ENCODE measurements at regions of chr21 and their contacts with region 1.

Region 1: DNA sequence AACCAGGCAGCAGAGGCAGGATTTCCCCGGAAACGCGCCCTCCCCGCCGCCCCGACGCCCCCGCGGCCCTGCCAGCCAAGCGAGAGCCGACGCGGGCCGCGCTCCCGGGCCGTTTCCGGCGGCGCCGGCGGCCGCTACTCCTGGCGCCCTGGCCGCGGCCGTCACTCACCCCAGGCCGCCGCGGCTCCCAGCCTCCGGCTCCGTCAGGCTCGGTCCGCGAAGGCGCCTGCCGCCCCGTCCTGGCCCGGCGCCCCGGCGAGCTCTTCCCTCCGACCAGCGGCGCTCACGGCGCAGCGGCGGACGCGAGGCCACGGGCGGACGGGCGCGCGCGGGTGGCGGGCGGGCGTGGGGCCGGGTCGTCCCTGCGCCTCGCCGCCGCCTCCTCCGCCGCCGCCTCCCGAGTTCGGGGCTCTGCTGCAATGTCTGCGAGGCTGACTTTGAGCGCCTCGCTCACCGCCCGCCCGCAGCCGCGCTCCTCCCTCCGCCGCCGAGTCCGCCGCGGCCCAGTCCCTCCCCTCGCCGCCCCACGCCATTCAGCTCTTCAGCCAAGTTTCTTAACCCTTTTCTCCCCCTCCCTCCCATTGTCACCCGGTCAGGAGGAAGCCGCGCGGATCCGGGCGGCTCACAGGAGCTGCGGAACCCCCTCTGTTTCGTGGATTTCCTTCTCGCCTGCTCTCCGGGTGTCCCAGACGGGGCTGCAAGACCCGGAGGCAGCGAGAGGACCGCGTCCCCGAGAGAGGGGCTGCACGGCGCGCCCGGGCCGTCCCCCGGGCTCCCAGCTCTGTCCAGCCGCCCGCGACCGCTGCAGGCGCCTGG is at the start of gene NRIP1:
- H3K4me3 ChIP-seq: peak within 1 kb of the TSS; percentile 77
- H3K27ac ChIP-seq: peak within 1 kb of the TSS; percentile 96
- H3K4me1 ChIP-seq: peaks cover 27% of the 10 kb centered on the region
- CTCF ChIP-seq: no peak

Region 2: GRCh38 chr21:15084668-15085067 is 19.9 kb after region 1 on chr21:
- CTCF ChIA-PET with region 1: no interaction called
- POLR2A ChIA-PET with region 1: interaction called, 13 read pairs
- H3K4me3 ChIP-seq: no peak overlapping the region
- H3K27ac ChIP-seq: no peak overlapping the region
- H3K4me1 ChIP-seq: peaks cover 8% of the 10 kb centered on the region
- CTCF ChIP-seq: no peak

Region 3: DNA sequence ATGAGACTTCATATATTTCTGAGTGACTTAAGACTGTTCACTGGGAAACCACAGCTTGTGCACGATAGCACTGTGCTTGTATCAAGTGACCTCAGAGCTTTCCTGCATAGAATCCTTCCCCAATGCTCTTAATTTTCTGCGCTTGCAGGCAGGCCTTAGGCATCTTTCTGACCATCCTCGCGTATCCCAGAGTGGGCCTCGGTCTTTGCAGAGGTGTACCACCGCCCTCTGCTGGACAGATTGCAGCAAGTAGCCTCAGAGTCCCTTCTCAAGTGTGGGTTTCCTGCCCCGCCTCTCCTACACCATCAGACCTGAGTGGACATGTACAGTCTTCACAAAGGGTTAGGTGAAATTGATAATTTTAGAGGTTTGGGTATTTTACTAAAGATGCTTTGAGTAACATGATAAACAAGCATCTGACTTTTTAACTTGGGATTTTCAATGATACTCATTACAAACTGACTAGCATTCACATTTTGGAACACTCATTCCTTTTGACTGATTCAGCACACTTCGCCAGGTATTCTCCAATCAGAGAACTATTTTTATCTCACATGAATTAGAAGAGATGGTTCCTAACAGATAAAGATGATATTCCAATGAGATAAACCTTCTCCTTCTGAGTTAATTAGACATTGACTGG is 418.5 kb after region 1 on chr21:
- CTCF ChIA-PET with region 1: interaction called, 6 read pairs
- POLR2A ChIA-PET with region 1: interaction called, 12 read pairs
- H3K4me3 ChIP-seq: no peak overlapping the region
- H3K27ac ChIP-seq: no peak overlapping the region
- H3K4me1 ChIP-seq: no peaks in the 10 kb centered on the region
- CTCF ChIP-seq: peak; percentile 49; the same call in 1 of the 2 replicates